Activated T-helper 1 cell treated with anti-CD3 and anti-CD28 coated beads, Interleukin-12 subunit alpha, Interleukin-12 subunit beta, Interleukin-2, Interleukin-4 antibody, amounts not matched to agents 30 ng/mL and 10 ng/mL and 1 ng/mL, durations not matched to agents 14 hours and 24 hours and 36 hours (primary cell): ENCODE measurements at regions of chr14 and their contacts with region 1.

Region 1: DNA sequence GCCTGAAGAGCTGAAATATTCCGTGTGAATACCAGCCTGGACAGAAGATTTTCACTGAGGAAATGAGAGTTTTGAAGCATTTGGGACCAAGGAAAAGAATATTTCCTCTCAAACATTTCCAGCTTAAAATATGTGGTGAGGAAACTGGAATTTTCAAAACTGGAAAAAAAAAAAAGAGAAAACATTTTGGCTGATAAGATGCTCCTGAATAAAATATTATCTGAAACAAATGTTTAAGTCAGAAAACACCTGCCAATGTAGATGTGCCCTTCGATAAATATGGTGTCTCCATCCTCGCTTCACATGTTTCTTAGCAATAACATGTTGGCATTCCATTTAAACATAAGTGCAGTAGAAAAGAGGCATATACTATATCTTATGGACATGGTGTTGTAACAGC is 567.0 kb downstream of the PRKD1 start:
- DNase-seq: no peak
- H3K4me3 Mint-ChIP-seq: no peak overlapping the region
- H3K27ac Mint-ChIP-seq: no peak overlapping the region
- H3K4me1 Mint-ChIP-seq: no peaks in the 10 kb centered on the region
- H3K27me3 Mint-ChIP-seq: no peaks in the 10 kb centered on the region

Region 2: DNA sequence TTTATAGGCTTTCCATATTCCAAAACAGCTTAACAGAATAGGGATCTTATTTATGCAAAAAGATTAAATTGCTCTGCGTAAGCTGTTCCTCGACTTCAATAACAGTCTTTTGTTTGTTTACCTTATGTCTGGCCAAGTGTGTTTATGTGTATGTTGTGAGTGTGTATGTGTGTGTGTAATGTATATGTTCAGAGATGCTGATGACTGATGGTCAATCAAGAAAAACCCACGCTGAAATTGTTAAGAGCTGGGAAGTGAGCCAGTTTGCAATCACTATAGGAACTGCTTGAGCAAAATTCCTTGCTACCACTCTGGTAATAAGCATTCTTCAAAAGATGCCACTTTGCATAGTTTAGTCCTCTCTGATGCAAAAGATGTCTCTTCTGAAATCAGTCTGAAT is 507.3 kb after region 1 on chr14:
- intact Hi-C with region 1: loop called (anchors 5 kb)
- DNase-seq: no peak
- H3K4me3 Mint-ChIP-seq: no peak overlapping the region
- H3K27ac Mint-ChIP-seq: no peak overlapping the region
- H3K4me1 Mint-ChIP-seq: no peaks in the 10 kb centered on the region
- H3K27me3 Mint-ChIP-seq: no peaks in the 10 kb centered on the region